ENCODE measurements at regions of chr6 and their contacts with region 1.

Region 1: DNA sequence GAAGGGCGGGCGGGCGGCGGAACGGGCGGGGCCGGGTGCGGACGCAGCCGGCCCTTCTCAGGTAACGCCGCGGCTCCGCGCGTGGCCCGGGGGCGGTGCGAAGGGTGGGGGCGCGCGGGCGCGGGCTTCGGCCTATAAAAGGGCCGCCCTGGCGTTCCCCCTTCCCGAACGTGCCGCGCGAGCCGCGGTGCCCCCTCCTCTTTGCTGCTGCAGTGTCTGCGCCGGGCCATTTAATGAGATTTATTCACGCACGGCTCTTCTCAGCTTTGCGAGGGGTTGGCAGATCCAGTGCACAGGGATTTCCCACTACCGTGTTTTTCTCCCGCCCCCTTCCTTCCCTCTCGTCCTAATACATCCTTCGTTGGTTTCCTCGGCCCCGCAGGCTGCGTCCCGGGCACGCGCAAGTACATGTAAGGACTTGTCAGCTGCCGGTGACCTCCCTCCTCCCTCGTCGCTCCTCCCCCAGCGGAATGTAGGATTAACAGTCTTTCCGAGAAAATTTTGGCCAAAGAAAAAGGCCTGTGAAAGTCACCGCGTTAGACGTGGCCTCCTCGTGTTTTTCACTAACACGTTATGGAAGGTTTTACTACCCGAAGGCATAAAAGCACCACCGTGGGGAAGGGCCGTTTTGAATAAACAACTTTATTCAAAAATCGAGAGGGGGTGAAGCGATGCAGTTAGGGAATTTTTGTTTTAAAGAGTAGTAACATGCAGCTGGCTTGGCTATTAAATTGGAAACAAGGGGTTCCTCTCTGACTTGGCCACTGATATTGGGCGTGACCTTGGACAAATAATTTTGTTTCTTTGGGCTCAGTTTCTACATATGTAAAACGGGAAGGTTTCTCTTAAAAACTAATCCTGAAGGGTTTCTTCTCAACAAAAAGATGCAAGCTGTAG is 966 bp upstream of the REV3L start:
- DNase-seq: peak; percentile 98
- ATAC-seq: peak; percentile 91
- H3K4me3 ChIP-seq: peak overlapping the region; percentile 91 to 95
- H3K27ac ChIP-seq: peak overlapping the region; percentile 89 to 95
- H3K4me1 ChIP-seq: no peaks in the 10 kb centered on the region
- H3K27me3 ChIP-seq: no peaks in the 10 kb centered on the region

Region 2: DNA sequence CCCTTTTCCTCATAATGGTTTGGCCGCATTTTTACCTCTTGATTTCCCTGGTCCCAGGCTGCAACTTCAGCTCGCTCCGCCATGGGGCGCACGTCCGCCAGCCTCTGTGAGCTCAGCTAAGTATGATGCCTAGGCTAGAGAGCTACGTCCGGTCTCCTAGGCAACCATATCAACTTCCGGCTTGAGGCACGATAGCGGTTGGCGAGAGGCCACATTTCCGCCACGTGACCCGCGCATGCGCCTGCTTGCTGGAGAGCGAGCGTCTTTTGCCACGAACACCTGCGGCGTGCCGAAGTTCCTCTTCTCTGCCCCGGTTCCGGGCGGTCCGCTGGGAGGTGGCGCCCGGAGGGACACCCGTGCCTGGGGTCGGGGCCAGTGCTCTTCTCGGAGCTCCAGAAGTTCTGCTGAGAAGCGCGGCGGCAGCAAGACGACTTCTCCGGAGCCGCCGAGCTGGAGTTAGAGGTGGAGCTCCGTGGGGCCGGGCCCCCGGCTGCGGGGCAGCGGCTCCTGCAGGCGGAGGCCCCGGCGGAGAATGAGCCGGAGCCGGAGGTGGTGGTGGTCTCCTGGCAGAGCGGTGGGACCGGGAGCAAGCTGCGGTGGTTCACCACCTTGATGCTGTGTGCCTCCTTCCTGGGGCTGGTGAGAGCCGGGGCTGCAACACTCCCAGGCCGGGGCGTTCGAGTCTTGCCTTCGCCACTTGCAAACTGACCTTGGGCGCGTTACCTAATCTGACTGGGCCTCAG is 224.7 kb before region 1 on chr6:
- intact Hi-C with region 1: loop called in 1 of 2 experiments (anchors 5 kb)
- DNase-seq: peak; percentile 99 to 100
- ATAC-seq: peak; percentile 100
- H3K4me3 ChIP-seq: peak overlapping the region; percentile 48 to 53
- H3K27ac ChIP-seq: peak overlapping the region in 1 of 2 donors; percentile 72
- H3K4me1 ChIP-seq: peaks cover 0 to 4% of the 10 kb centered on the region in 2 donors
- H3K27me3 ChIP-seq: no peaks in the 10 kb centered on the region

Region 3: GRCh38 chr6:111291336-111292259 is 192.4 kb before region 1 on chr6:
- intact Hi-C with region 1: no loop called
- DNase-seq: no peak
- ATAC-seq: no peak
- H3K4me3 ChIP-seq: no peak overlapping the region
- H3K27ac ChIP-seq: no peak overlapping the region
- H3K4me1 ChIP-seq: no peaks in the 10 kb centered on the region
- H3K27me3 ChIP-seq: no peaks in the 10 kb centered on the region

Region 4: DNA sequence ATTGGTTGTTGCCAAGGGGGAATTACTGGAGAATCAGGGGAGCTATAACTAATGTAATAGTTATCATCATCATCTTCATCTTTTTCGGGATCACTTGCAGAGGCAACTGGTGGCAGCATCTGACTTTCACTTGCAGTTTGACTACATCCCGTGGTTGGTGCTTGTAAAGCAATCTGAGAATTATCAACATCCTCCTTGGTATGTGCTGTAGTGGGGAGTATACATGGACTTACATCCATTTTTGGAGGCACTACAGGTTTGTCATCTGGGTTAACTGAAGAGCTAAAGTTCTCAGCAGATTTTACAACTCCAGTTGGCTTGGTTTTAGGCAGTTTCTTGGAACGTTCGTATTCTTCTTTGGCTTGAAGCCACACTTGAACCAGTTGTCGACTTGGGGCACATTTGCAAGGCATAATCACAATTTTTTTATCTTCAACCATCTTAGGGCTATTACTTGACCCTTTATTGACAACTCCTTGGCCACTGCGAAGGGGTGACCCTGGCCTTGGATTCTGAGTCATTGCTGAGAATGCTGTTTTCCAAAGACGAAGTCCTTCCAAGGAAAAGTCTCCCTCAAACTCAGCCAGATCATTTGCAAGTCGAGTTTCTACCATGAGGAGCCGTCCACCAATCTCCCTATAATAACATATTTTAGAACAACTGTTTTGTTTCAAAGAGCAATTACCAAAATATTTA is 116.4 kb before region 1 on chr6:
- intact Hi-C with region 1: loop called in 1 of 2 experiments (anchors 5 kb)
- DNase-seq: no peak
- ATAC-seq: peak; percentile 36
- H3K4me3 ChIP-seq: no peak overlapping the region
- H3K27ac ChIP-seq: peak overlapping the region; percentile 50 to 82
- H3K4me1 ChIP-seq: peaks cover 5% of the 10 kb centered on the region in 2 donors
- H3K27me3 ChIP-seq: no peaks in the 10 kb centered on the region

Region 5: DNA sequence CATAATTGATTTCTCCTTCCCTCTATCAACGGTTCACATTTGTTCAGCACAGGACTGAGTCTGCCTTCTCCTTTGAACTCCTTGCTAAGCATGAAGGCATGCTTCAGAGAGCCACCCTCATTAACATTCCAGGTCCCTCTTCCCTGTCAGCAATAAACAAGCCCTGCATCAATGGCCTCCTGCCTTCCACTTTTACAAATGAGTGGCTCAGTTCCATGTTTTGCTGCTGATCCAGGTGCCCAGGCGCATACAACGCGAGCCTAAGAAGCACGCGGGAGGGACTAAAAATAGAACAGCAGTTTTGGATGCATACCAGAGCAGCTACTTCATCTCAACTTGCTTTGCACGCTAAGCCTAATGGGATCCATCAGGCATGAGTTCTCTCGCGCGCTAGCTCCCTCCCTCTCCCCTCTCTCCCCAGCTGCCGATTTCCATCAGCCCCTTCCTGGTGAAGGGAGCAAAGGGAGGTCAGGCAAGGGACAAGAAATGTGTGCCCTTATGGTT is 68.3 kb after region 1 on chr6:
- intact Hi-C with region 1: loop called (anchors 5 kb)
- DNase-seq: peak; percentile 69 to 81
- ATAC-seq: peak; percentile 90
- H3K4me3 ChIP-seq: no peak overlapping the region
- H3K27ac ChIP-seq: peak overlapping the region in 1 of 2 donors; percentile 58
- H3K4me1 ChIP-seq: peaks cover 0 to 3% of the 10 kb centered on the region in 2 donors
- H3K27me3 ChIP-seq: no peaks in the 10 kb centered on the region

Region 6: DNA sequence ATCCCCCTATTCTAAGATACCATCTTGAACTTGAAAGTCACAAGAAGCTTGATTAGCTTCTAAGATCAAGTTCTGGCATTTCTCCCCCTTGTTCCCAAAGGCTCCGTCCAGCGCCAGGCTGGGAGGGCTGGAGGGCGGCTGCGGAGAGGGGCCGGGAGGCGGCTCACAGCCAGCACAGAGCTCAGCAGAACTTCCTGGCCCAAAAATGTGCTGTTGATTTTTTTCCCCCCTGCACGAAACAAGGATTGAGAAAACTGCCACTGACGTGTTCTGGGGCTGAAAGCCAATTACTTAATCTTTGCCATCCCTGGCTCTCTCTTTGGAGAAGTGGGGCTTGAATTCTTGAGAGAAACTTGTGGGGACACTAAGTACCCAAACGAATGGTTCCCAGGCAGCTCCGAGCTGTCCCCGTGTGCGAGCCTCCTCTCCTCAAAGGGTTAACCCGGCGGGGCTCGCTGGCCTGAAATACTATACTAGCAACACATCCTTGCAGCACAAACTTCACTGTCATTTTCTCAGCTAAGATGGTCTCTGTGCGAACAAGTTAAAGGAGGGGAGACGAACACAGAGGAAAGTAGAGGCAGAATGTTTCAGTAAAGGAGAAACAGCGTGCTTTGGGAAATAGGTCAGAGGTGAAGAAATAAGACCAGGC is 121.2 kb after region 1 on chr6:
- intact Hi-C with region 1: loop called (anchors 1 to 5 kb)
- DNase-seq: peak; percentile 88 to 91
- ATAC-seq: peak; percentile 83
- H3K4me3 ChIP-seq: peak overlapping the region; percentile 43 to 66
- H3K27ac ChIP-seq: peak overlapping the region; percentile 98 to 99
- H3K4me1 ChIP-seq: peaks cover 2 to 6% of the 10 kb centered on the region in 2 donors
- H3K27me3 ChIP-seq: no peaks in the 10 kb centered on the region

Measured in aorta (tissue), 5 donors.